ENCODE measurements at regions of chr12 and their contacts with region 1.

Region 1: GRCh38 chr12:100733817-100734593 is 60.6 kb upstream of the ANO4 start:
- DNase-seq: peak; percentile 51
- H3K4me3 Mint-ChIP-seq: no peak overlapping the region
- H3K27ac Mint-ChIP-seq: no peak overlapping the region
- H3K4me1 Mint-ChIP-seq: no peaks in the 10 kb centered on the region
- H3K27me3 Mint-ChIP-seq: peaks cover 59% of the 10 kb centered on the region
- CTCF ChIP-seq: peak; percentile 74

Region 2: DNA sequence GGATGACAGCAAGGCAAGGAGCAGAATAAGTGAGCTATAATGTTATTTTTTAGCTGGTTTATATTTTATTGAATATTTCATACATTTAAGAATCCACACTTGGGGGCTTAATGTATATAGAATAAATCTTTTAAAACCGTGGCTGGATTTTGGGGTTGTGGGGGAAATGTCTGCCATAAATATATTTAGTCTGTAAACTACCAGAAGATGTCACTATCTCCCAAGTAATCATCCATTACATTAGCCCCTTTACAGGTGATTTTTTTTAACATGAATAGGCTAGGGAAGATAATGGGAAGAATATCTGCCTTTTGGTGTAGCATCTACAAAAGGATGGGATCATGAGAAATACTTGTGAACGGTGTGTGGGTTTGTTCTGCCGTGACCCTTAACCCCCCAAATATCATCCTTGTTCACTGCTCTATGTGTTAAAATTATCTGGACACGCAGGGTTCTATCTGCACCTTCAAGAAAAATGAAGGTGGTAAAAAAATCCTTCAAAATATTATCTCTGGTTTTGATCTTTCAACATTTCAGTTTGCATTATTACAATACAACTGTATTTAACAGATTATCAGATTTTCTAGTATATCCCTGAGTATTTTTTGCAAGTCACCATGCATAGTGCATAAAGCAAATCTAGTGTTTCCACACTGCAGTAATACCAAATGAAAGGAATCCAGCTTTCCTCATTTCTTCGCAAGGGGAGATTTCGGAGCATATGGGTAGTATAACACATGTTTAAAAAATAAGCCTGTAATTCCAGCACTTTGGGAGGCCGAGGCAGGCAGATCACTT is 385.1 kb before region 1 on chr12:
- CTCF ChIA-PET with region 1: interaction called, 45 read pairs
- POLR2A ChIA-PET with region 1: interaction called, 4 read pairs
- intact Hi-C with region 1: loop called (anchors 1 kb)
- DNase-seq: peak; percentile 50
- H3K4me3 Mint-ChIP-seq: no peak overlapping the region
- H3K27ac Mint-ChIP-seq: no peak overlapping the region
- H3K4me1 Mint-ChIP-seq: no peaks in the 10 kb centered on the region
- H3K27me3 Mint-ChIP-seq: no peaks in the 10 kb centered on the region
- CTCF ChIP-seq: peak; percentile 38

Region 3: DNA sequence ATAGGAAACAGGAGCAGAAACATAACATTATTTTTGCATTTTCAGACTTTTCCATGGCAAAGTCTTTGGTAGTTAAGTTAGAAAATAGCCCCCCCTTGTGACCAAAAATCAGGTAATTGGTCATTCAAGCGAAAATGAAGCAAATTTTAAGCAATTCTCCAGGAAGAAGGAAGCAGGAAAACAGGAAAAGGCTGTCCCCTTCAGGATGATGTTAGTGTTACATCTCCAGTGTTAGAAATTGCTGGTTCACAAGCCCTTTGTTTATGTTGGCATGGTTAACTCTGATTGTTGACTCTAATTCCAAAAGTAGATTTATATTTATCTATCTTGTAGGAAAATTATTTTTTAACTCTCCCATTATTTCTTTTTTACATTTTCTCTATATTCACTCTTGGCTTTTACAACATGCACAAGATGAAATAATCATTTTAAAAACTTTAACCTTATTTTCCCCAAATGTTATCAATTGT is 179.4 kb before region 1 on chr12:
- CTCF ChIA-PET with region 1: interaction called, 4 read pairs
- POLR2A ChIA-PET with region 1: no interaction called
- intact Hi-C with region 1: loop called (anchors 2 kb)
- DNase-seq: peak; percentile 91
- H3K4me3 Mint-ChIP-seq: no peak overlapping the region
- H3K27ac Mint-ChIP-seq: no peak overlapping the region
- H3K4me1 Mint-ChIP-seq: no peaks in the 10 kb centered on the region
- H3K27me3 Mint-ChIP-seq: no peaks in the 10 kb centered on the region
- CTCF ChIP-seq: peak; percentile 91

Region 4: DNA sequence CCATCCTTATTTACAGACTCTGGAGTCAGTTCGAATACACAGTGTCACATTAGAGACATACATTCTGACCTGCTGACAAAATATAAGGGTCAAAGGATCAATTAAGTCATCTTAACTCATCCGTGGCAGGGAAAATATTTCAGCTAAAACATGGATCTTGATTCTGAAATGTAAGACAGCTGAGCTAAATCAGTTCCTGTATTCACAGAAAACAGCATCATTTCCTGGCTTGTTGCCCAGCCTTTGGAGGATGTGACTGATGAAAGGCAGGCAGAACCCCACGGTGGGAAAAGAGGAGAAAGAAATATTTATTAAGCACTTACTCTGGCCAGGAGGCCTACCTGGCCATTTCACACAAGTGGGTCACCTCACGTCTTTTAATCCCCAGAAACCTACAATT is 58.6 kb before region 1 on chr12:
- CTCF ChIA-PET with region 1: interaction called, 80 read pairs
- POLR2A ChIA-PET with region 1: no interaction called
- intact Hi-C with region 1: no loop called
- DNase-seq: peak; percentile 59
- H3K4me3 Mint-ChIP-seq: no peak overlapping the region
- H3K27ac Mint-ChIP-seq: no peak overlapping the region
- H3K4me1 Mint-ChIP-seq: no peaks in the 10 kb centered on the region
- H3K27me3 Mint-ChIP-seq: peaks cover 19% of the 10 kb centered on the region
- CTCF ChIP-seq: no peak

Region 5: GRCh38 chr12:100688451-100688864 is 45.5 kb before region 1 on chr12:
- CTCF ChIA-PET with region 1: interaction called, 15 read pairs
- POLR2A ChIA-PET with region 1: no interaction called
- intact Hi-C with region 1: no loop called
- DNase-seq: peak; percentile 33
- H3K4me3 Mint-ChIP-seq: no peak overlapping the region
- H3K27ac Mint-ChIP-seq: no peak overlapping the region
- H3K4me1 Mint-ChIP-seq: peaks cover 6% of the 10 kb centered on the region
- H3K27me3 Mint-ChIP-seq: no peaks in the 10 kb centered on the region
- CTCF ChIP-seq: no peak

Region 6: GRCh38 chr12:100823963-100824362 is 90.0 kb after region 1 on chr12:
- CTCF ChIA-PET with region 1: no interaction called
- POLR2A ChIA-PET with region 1: no interaction called
- intact Hi-C with region 1: no loop called
- DNase-seq: no peak
- H3K4me3 Mint-ChIP-seq: no peak overlapping the region
- H3K27ac Mint-ChIP-seq: no peak overlapping the region
- H3K4me1 Mint-ChIP-seq: no peaks in the 10 kb centered on the region
- H3K27me3 Mint-ChIP-seq: no peaks in the 10 kb centered on the region
- CTCF ChIP-seq: no peak

Region 7: DNA sequence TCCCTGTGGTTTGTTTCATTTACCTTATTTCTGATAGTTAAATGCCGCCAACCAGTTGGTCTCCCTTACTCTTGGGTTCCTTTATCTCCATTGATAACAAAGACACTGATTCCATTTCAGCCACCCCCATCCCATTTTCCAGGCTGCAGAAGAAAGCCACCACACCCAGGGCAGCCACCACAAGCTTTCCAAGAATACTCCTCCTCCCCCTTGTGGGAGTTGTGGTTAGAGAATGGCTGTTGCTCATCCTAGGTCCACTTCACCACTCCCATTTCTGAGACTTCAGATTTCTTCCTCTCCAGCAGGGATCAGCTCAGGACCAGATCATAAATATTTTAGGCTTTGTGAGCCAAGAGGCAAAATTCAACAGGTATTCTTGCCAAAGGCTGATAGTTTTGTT is 134.5 kb after region 1 on chr12:
- CTCF ChIA-PET with region 1: no interaction called
- POLR2A ChIA-PET with region 1: no interaction called
- intact Hi-C with region 1: no loop called
- DNase-seq: peak; percentile 15
- H3K4me3 Mint-ChIP-seq: no peak overlapping the region
- H3K27ac Mint-ChIP-seq: no peak overlapping the region
- H3K4me1 Mint-ChIP-seq: peaks cover 7% of the 10 kb centered on the region
- H3K27me3 Mint-ChIP-seq: no peaks in the 10 kb centered on the region
- CTCF ChIP-seq: no peak

Region 8: DNA sequence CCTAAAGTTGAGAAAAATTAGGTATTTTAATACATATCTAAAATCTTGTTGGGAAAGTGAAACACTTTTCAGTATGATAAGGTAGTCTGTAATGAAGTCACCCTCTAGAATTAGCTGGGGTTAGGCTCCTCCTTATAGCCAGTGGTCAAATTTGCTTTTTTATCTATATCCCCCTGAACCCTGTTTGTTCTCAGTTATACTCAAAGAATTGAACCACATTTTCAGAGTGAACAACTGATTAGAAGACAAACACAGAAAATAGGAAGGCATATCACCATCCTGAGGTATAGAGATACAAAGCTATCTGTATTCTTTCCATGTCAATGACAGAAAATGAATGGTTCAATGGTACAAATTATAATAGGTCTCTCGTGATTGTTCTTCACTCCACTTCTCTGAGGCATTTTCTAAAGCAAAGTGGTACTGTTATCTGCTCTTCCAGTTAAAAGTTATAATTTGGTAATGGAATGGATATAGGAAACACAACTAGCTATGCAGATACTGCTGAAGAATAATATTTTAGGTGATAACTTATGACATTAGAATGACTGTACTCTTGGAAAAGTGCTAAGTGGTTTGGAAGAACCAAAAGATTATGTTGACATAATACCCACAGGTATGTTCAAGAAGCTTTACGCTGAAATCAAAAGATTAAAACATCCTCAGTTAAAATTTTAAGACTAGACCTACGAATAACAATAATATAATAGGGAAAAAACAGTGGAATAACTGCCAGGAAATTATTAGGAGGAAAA is 1300.2 kb after region 1 on chr12:
- CTCF ChIA-PET with region 1: no interaction called
- POLR2A ChIA-PET with region 1: no interaction called
- intact Hi-C with region 1: no loop called
- DNase-seq: no peak
- H3K4me3 Mint-ChIP-seq: no peak overlapping the region
- H3K27ac Mint-ChIP-seq: no peak overlapping the region
- H3K4me1 Mint-ChIP-seq: no peaks in the 10 kb centered on the region
- H3K27me3 Mint-ChIP-seq: no peaks in the 10 kb centered on the region
- CTCF ChIP-seq: no peak